ENCODE measurements at regions of chrX and their contacts with region 1.

Region 1: GRCh38 chrX:102599084-102599950 is at the start of gene ARMCX5:
- DNase-seq: peak; percentile 43
- H3K4me3 ChIP-seq: peak within 1 kb of the TSS; percentile 80
- H3K27ac ChIP-seq: peak within 1 kb of the TSS; percentile 73
- H3K27me3 ChIP-seq: no peaks in the 10 kb centered on the region
- CTCF ChIP-seq: 0 out of 2 replicates have a peak, but pooled peaks have one; percentile 9
- polyA plus RNA-seq, gene ARMCX5: 20.2 and 20.5 TPM in 2 replicates

Region 2: DNA sequence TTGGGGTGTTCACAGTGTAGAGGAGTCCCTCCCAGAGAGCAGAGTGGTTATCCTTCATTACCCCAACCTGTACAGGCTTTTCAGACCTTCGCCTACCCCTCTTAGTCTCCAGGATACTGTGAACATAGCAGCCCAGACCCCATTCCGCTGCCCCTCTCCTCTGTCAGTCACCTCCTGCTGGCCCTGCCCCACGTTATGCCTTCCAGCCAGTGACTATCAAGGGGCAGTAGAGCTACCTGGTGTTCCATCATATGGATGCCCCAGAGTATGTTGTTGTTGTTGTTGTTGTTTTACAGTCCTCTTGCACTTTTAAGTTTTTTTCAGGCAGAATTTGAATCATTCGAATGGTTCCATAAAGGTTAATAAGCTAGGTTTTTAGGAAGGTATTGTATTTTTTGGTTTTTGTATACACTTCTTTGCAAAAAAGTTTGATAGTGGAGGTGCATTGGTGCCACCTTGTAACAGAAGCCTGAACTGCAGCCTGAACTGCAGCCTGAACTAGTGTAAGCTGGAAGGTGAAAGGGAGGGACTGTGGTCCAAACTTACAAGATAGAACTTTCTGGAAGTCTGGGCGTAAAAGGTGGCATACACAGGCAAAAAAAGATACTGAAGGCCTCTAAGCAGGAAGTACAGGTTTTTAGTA is 236.3 kb after region 1 on chrX:
- CTCF ChIA-PET with region 1: interaction called, 13 read pairs
- POLR2A ChIA-PET with region 1: no interaction called
- DNase-seq: no peak
- H3K4me3 ChIP-seq: no peak overlapping the region
- H3K27ac ChIP-seq: no peak overlapping the region
- H3K27me3 ChIP-seq: no peaks in the 10 kb centered on the region
- CTCF ChIP-seq: peak; percentile 67